Calu3 (cell line): ENCODE measurements at regions of chr3 and their contacts with region 1.

Region 1: DNA sequence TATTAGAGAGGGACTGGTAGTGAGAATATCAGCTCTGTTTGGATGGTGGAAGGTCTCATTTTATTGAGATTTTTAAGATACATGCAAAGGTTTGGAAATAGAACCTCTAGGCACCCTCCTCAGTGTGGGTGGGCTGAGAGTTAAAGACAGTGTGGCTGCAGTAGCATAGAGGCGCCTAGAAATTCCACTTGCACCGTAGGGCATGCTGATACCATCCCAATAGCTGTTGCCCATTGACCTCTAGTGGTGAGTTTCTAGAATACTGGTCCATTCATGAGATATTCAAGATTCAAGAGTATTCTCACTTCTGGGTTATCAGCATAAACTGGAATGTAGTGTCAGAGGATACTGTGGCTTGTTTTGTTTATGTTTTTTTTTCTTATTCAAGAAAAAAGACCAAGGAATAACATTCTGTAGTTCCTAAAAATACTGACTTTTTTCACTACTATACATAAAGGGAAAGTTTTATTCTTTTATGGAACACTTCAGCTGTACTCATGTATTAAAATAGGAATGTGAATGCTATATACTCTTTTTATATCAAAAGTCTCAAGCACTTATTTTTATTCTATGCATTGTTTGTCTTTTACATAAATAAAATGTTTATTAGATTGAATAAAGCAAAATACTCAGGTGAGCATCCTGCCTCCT is 87.2 kb downstream of the TGFBR2 start:
- DNase-seq: peak; percentile 45
- H3K4me3 Mint-ChIP-seq: no peak overlapping the region
- H3K27ac Mint-ChIP-seq: no peak overlapping the region
- H3K4me1 Mint-ChIP-seq: peaks cover 35% of the 10 kb centered on the region
- H3K27me3 Mint-ChIP-seq: no peaks in the 10 kb centered on the region
- CTCF ChIP-seq: peak; percentile 51

Region 2: GRCh38 chr3:30084971-30085403 is 608.6 kb before region 1 on chr3:
- CTCF ChIA-PET with region 1: interaction called, 14 read pairs
- intact Hi-C with region 1: no loop called
- DNase-seq: no peak
- H3K4me3 Mint-ChIP-seq: no peak overlapping the region
- H3K27ac Mint-ChIP-seq: no peak overlapping the region
- H3K4me1 Mint-ChIP-seq: peaks cover 12% of the 10 kb centered on the region
- H3K27me3 Mint-ChIP-seq: no peaks in the 10 kb centered on the region
- CTCF ChIP-seq: no peak

Region 3: DNA sequence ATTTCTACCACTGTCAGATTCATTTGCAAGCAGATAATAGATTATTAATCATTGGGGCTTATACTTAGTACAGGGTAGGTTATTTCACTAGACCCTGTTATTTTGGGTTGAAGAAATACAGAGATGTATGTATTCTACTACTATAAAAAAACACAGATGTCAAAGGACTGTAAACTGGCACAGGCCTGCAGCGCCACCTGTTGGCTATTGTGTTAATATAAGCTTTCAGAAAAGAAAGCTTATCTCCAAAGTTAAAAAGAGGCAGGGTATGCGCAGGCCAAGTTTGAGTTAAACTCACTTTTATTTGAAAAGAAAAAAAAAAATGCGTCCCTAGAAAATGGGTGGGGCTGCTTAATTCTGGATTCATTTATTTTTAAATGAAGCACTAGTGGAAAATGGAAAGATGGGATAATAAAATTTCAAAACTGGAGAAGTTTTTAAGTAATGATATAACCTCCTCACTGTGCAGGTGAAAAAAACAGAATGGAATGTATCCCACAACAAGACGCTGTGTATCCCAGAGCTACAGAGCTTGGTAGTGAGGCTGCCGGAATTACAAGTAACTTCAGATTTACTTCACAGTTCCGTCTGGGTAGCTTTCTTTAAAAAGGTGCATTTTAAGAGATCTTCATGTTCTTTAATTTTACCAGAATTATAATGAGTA is 494.4 kb before region 1 on chr3:
- CTCF ChIA-PET with region 1: interaction called, 3 read pairs
- intact Hi-C with region 1: loop called (anchors 5 kb)
- DNase-seq: peak; percentile 58
- H3K4me3 Mint-ChIP-seq: no peak overlapping the region
- H3K27ac Mint-ChIP-seq: no peak overlapping the region
- H3K4me1 Mint-ChIP-seq: no peaks in the 10 kb centered on the region
- H3K27me3 Mint-ChIP-seq: no peaks in the 10 kb centered on the region
- CTCF ChIP-seq: peak; percentile 68

Region 4: GRCh38 chr3:30538787-30539186 is 154.8 kb before region 1 on chr3:
- CTCF ChIA-PET with region 1: no interaction called
- intact Hi-C with region 1: loop called (anchors 5 kb)
- DNase-seq: no peak
- H3K4me3 Mint-ChIP-seq: peak overlapping the region; percentile 24
- H3K27ac Mint-ChIP-seq: peak overlapping the region; percentile 43
- H3K4me1 Mint-ChIP-seq: peaks cover 18% of the 10 kb centered on the region
- H3K27me3 Mint-ChIP-seq: no peaks in the 10 kb centered on the region
- CTCF ChIP-seq: no peak

Region 5: DNA sequence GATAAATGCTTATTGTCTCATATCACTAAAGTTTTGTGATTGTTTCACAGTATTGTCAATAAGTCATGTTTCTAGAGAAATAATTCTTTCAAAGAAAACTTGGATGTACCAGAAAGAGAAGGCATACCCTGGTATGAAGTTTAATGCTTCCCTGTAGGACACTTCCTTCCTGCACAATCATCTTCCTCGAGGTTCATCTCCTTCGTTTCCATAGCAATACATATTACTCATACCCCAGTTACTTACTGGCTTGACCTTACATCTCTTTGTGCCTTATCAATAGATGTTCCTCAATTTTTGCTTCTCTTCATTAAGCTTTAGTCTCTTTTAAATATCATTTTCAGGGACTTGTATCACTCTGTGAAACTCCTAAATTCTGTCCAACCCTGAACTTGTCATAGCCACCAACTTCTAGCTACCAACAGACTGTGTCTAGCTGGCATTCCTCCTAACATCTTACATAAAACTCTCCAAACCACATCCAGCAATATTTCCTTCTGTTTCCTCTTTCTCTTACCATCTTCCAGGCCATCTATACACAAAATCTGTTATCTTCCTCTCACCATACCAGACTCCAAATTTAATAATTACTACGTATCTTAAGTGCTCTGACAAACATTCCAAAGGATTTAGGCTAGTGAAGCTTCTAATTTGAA is 66.6 kb after region 1 on chr3:
- CTCF ChIA-PET with region 1: no interaction called
- intact Hi-C with region 1: no loop called
- DNase-seq: no peak
- H3K4me3 Mint-ChIP-seq: no peak overlapping the region
- H3K27ac Mint-ChIP-seq: no peak overlapping the region
- H3K4me1 Mint-ChIP-seq: no peaks in the 10 kb centered on the region
- H3K27me3 Mint-ChIP-seq: no peaks in the 10 kb centered on the region
- CTCF ChIP-seq: no peak